Activated naive CD4-positive, alpha-beta T cell treated with anti-CD3 and anti-CD28 coated beads for 36 hours (primary cell): ENCODE measurements at regions of chr4 and their contacts with region 1.

Region 1: DNA sequence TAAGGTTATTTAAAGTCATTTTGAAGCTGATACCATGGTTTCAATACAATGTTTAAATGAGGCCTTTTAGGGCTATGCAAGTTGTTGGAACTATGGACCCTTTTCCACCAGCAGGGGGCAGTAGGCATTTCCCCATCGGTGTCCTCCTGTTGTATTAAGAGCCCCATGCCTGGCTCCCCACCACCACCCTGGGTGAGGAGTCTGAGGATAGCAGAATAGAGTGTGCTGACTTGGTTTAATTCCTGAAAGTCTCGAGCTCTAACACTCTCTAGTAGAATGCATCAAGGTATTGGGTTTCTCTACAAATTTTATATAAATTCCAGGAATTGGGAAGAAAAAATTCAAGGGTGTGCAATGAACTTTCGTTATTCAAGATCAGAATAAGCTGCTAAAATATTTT is 234.8 kb upstream of the JADE1 start:
- DNase-seq: peak; percentile 91
- H3K4me3 Mint-ChIP-seq: no peak overlapping the region
- H3K27ac Mint-ChIP-seq: no peak overlapping the region
- H3K4me1 Mint-ChIP-seq: no peaks in the 10 kb centered on the region
- H3K27me3 Mint-ChIP-seq: peaks cover 6% of the 10 kb centered on the region

Region 2: GRCh38 chr4:128315477-128316137 is 259.1 kb before region 1 on chr4:
- CTCF ChIA-PET with region 1: no interaction called
- intact Hi-C with region 1: no loop called
- DNase-seq: no peak
- H3K4me3 Mint-ChIP-seq: no peak overlapping the region
- H3K27ac Mint-ChIP-seq: no peak overlapping the region
- H3K4me1 Mint-ChIP-seq: no peaks in the 10 kb centered on the region
- H3K27me3 Mint-ChIP-seq: no peaks in the 10 kb centered on the region

Region 3: DNA sequence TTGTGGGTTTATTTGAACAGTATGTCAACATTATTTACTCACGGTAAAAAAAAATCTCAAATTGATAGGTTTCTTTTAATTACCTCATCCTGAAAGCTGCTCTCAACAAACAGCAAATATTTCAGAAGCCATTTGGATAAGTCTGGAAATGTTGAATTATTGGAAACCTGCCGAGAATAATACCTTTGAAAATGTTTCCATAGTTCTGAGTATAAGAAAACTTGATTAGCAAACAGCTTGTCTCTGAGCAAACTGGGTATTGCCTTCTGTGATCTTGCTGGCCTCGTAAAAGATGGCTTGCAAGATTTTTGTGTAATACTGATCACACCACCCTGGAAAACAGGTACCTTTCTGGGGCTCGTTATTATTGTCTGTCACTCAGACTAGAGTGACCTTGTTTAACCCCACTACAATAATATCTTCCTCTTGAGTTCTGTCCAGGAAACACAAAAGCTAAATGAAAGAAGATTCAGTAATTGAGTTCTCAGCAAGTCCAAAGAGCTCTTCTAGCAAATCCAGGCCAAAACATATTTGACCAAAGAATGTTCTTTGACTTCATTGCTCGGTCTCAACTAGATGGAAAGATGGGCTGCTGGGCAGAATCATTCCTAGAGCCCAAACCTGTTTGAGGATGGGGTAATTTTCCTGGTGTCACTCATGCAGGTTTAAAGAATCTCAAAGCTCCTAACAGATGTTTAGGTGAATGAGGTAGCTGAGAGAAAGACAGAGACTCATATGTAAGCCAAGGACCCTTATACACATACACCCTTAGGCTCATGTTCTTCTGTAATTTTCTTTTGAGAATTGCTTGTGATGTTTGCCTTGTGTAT is 20.8 kb before region 1 on chr4:
- CTCF ChIA-PET with region 1: interaction called, 8 read pairs
- intact Hi-C with region 1: loop called (anchors 1 kb)
- DNase-seq: no peak
- H3K4me3 Mint-ChIP-seq: peak overlapping the region; percentile 73
- H3K27ac Mint-ChIP-seq: no peak overlapping the region
- H3K4me1 Mint-ChIP-seq: peaks cover 13% of the 10 kb centered on the region
- H3K27me3 Mint-ChIP-seq: peaks cover 7% of the 10 kb centered on the region

Region 4: GRCh38 chr4:128675083-128675482 is 100.4 kb after region 1 on chr4:
- CTCF ChIA-PET with region 1: no interaction called
- intact Hi-C with region 1: loop called (anchors 5 kb)
- DNase-seq: no peak
- H3K4me3 Mint-ChIP-seq: no peak overlapping the region
- H3K27ac Mint-ChIP-seq: no peak overlapping the region
- H3K4me1 Mint-ChIP-seq: peaks cover 4% of the 10 kb centered on the region
- H3K27me3 Mint-ChIP-seq: no peaks in the 10 kb centered on the region

Region 5: GRCh38 chr4:128863312-128864075 is 288.8 kb after region 1 on chr4:
- CTCF ChIA-PET with region 1: interaction called, 5 read pairs
- intact Hi-C with region 1: loop called (anchors 1 kb)
- DNase-seq: peak; percentile 75
- H3K4me3 Mint-ChIP-seq: no peak overlapping the region
- H3K27ac Mint-ChIP-seq: peak overlapping the region; percentile 62
- H3K4me1 Mint-ChIP-seq: peaks cover 48% of the 10 kb centered on the region
- H3K27me3 Mint-ChIP-seq: no peaks in the 10 kb centered on the region